Activated CD4-positive, alpha-beta memory T cell treated with anti-CD3 and anti-CD28 coated beads for 36 hours (primary cell): ENCODE measurements at regions of chr3 and their contacts with region 1.

Region 1: DNA sequence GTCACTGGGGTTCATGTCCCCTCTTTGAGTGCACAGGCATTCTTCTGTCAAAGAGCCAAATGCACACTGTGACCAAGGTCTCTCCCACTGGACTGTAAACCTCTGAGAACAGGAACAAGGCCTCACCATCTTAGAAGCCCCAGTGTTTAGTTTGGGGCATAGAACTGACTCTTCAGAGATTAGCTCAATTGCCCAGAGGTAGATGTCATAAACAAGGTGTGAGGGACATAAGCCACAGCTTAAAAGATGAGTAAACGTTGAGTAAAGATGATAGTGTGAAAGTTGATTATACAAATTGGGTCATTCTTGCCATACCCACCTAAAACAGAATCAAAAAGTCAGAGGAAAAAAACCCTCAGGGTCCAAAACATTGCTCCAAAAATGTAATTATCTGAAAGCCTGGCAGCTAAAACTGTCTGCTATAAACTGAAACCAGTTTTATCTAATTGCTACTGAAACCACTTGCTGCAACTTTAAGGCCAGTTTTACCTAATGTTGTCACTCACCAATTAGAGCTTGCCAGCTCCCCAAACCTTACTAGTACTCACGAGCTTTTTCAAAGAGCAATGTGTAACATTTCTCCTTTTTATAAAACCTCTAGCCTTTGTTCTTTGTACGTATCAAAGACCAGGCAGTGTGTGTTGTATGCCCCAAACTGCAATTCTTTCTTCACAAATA is 415.2 kb downstream of the RAP2B start:
- DNase-seq: no peak
- H3K4me3 Mint-ChIP-seq: no peak overlapping the region
- H3K27ac Mint-ChIP-seq: no peak overlapping the region
- H3K4me1 Mint-ChIP-seq: peaks cover 6% of the 10 kb centered on the region
- H3K27me3 Mint-ChIP-seq: no peaks in the 10 kb centered on the region

Region 2: GRCh38 chr3:153429821-153430220 is 147.4 kb before region 1 on chr3:
- CTCF ChIA-PET with region 1: no interaction called
- POLR2A ChIA-PET with region 1: no interaction called
- intact Hi-C with region 1: no loop called
- DNase-seq: no peak
- H3K4me3 Mint-ChIP-seq: no peak overlapping the region
- H3K27ac Mint-ChIP-seq: no peak overlapping the region
- H3K4me1 Mint-ChIP-seq: no peaks in the 10 kb centered on the region
- H3K27me3 Mint-ChIP-seq: no peaks in the 10 kb centered on the region

Region 3: DNA sequence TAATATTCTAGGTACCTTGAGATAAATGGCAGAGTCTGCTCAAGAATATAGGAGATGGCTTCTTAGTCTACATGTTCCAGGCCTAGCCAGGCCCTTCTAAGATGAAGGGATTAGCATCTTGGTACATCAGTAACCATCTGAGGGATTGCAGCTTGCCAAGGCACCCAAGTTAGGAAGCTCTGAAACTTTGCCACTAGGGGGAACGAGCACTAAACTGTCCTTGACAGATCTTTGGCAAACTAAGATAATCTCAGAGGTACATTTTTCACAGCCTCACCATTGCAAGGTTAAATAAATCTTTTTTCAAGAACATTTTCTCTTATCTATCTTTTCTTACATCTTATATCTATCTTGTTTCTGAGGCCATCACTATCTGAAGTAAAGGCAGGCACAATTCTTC is 64.0 kb before region 1 on chr3:
- CTCF ChIA-PET with region 1: no interaction called
- POLR2A ChIA-PET with region 1: no interaction called
- intact Hi-C with region 1: no loop called
- DNase-seq: no peak
- H3K4me3 Mint-ChIP-seq: no peak overlapping the region
- H3K27ac Mint-ChIP-seq: no peak overlapping the region
- H3K4me1 Mint-ChIP-seq: no peaks in the 10 kb centered on the region
- H3K27me3 Mint-ChIP-seq: no peaks in the 10 kb centered on the region

Region 4: GRCh38 chr3:153552887-153553598 is 24.2 kb before region 1 on chr3:
- CTCF ChIA-PET with region 1: no interaction called
- POLR2A ChIA-PET with region 1: no interaction called
- intact Hi-C with region 1: loop called (anchors 1 kb)
- DNase-seq: no peak
- H3K4me3 Mint-ChIP-seq: no peak overlapping the region
- H3K27ac Mint-ChIP-seq: no peak overlapping the region
- H3K4me1 Mint-ChIP-seq: peaks cover 16% of the 10 kb centered on the region
- H3K27me3 Mint-ChIP-seq: no peaks in the 10 kb centered on the region